Endothelial cell of umbilical vein (primary cell): ENCODE measurements at regions of chr11 and their contacts with region 1.

Region 1: GRCh38 chr11:12331239-12331874 is 46.0 kb upstream of the PARVA start:
- DNase-seq: peak; percentile 82
- H3K4me3 ChIP-seq: no peak overlapping the region
- H3K27ac ChIP-seq: no peak overlapping the region
- H3K4me1 ChIP-seq: no peaks in the 10 kb centered on the region
- H3K27me3 ChIP-seq: no peaks in the 10 kb centered on the region
- CTCF ChIP-seq: peak; percentile 61 to 70
- POLR2A ChIP-seq: no peak

Region 2: DNA sequence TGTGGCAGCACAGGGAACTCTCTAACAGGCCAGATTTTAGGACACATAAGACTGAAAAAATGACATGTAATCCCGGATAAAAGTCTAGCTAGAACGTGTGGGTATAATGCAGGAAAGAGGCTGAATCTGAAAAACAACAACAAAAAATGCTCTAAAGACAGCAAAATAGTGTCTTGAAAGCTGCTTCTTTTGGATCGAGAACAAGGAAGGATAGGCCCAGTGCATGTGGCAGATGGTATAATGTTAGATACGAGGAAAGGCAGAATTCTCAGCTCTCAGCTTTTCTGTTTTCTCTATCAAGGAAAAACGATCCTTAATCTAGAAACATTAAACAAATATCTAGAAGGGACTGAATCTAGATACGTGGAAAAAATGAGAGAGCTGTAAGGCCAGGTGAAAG is 12.2 kb after region 1 on chr11:
- CTCF ChIA-PET with region 1: interaction called, 16 read pairs
- POLR2A ChIA-PET with region 1: no interaction called
- dilution Hi-C with region 1: no loop called
- intact Hi-C with region 1: no loop called
- DNase-seq: no peak
- H3K4me3 ChIP-seq: no peak overlapping the region
- H3K27ac ChIP-seq: no peak overlapping the region
- H3K4me1 ChIP-seq: no peaks in the 10 kb centered on the region
- H3K27me3 ChIP-seq: no peaks in the 10 kb centered on the region
- CTCF ChIP-seq: no peak
- POLR2A ChIP-seq: no peak

Region 3: GRCh38 chr11:12485328-12485727 is 154.0 kb after region 1 on chr11:
- CTCF ChIA-PET with region 1: interaction called, 24 read pairs
- POLR2A ChIA-PET with region 1: no interaction called
- dilution Hi-C with region 1: no loop called
- intact Hi-C with region 1: no loop called
- DNase-seq: peak; percentile 14
- H3K4me3 ChIP-seq: no peak overlapping the region
- H3K27ac ChIP-seq: no peak overlapping the region
- H3K4me1 ChIP-seq: no peaks in the 10 kb centered on the region
- H3K27me3 ChIP-seq: no peaks in the 10 kb centered on the region
- CTCF ChIP-seq: peak; percentile 31 to 37
- POLR2A ChIP-seq: no peak

Region 4: GRCh38 chr11:12673924-12674570 is 342.7 kb after region 1 on chr11 and contains the start of gene TEAD1:
- CTCF ChIA-PET with region 1: interaction called, 8 read pairs
- POLR2A ChIA-PET with region 1: no interaction called
- dilution Hi-C with region 1: no loop called
- intact Hi-C with region 1: loop called (anchors 1 kb)
- DNase-seq: peak; percentile 95
- H3K4me3 ChIP-seq: peak within 1 kb of the TSS; percentile 85 to 94 (median 89)
- H3K27ac ChIP-seq: peak within 1 kb of the TSS; percentile 71
- H3K4me1 ChIP-seq: peaks cover 22% of the 10 kb centered on the region
- H3K27me3 ChIP-seq: no peaks in the 10 kb centered on the region
- CTCF ChIP-seq: no peak
- POLR2A ChIP-seq: peak; percentile 87
- total RNA-seq, gene TEAD1: 43.2 and 49.0 TPM in 2 replicates

Region 5: DNA sequence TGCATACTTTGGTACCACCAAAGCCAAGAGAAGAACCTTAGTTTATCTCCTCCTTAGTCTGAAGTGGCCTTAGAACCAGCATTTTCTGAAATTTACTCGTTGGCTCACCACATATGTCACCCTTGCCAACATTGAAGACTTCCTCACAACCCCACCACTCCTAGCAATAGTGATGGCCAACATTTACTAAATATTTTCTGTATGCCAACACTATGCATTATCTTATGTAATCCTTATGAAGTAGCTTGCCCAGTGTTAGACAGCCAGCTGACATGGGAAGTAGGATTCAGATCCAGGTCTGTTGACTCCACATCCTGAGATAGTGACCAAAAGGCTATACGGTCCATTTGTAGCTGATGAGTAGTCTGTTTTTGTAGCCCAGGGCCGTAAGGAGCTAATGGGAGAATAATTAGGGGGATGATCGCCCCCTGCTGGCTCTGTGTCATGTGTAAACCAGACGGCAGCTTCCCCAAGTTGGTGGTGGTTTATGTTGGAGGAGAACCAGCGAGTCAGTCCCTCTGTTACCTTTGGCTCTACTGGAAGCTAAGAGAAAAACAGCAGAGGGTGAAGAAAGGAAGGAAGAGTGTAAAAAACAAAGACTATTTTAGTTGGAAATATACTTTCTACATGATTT is 557.3 kb after region 1 on chr11:
- CTCF ChIA-PET with region 1: interaction called, 191 read pairs
- POLR2A ChIA-PET with region 1: no interaction called
- dilution Hi-C with region 1: no loop called
- intact Hi-C with region 1: loop called (anchors 1 kb)
- DNase-seq: peak; percentile 96
- H3K4me3 ChIP-seq: no peak overlapping the region
- H3K27ac ChIP-seq: no peak overlapping the region
- H3K4me1 ChIP-seq: peaks cover 9% of the 10 kb centered on the region
- H3K27me3 ChIP-seq: no peaks in the 10 kb centered on the region
- CTCF ChIP-seq: peak; percentile 82 to 86
- POLR2A ChIP-seq: no peak

Region 6: GRCh38 chr11:13152736-13153533 is 821.6 kb after region 1 on chr11:
- CTCF ChIA-PET with region 1: interaction called, 15 read pairs
- POLR2A ChIA-PET with region 1: no interaction called
- dilution Hi-C with region 1: no loop called
- intact Hi-C with region 1: loop called (anchors 2 kb)
- DNase-seq: peak; percentile 55
- H3K4me3 ChIP-seq: no peak overlapping the region
- H3K27ac ChIP-seq: no peak overlapping the region
- H3K4me1 ChIP-seq: peaks cover 4% of the 10 kb centered on the region
- H3K27me3 ChIP-seq: peaks cover 0 to 6% of the 10 kb centered on the region in 2 experiments
- CTCF ChIP-seq: peak; percentile 28 to 35
- POLR2A ChIP-seq: no peak